ENCODE measurements at regions of chr7 and their contacts with region 1.

Region 1: GRCh38 chr7:97027427-97028234 is 3.0 kb upstream of the DLX5 start:
- DNase-seq: peak; percentile 89
- H3K4me3 ChIP-seq: peak overlapping the region; percentile 16 to 38; a peak in 3 of 4 replicates
- H3K27ac ChIP-seq: no peak overlapping the region
- H3K4me1 ChIP-seq: peaks cover 0 to 12% of the 10 kb centered on the region in 2 experiments; a peak in 1 of 4 replicates
- H3K27me3 ChIP-seq: peaks cover 22% of the 10 kb centered on the region
- CTCF ChIP-seq: peak; percentile 99
- EP300 ChIP-seq: no peak
- RAD21 ChIP-seq: peak; percentile 100

Region 2: DNA sequence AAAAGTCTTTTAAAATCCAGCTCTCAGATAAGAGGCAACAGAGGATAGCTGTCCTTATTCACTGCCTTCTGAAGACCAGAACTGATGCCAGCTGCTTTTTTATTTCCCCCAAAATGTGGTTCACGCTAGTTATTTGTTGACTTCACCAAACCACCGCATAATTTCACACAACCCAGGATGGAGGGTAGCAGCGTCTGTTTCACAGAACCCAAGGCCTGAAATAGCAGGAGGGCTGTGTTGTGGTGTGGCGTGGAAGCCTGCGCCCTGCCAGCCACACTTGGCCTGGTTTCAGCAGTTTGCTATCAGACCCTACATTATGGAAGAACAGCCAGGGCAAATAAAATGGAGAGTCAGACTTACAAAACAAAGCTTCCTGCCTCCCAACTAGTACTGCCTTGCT is 1099.9 kb before region 1 on chr7:
- CTCF ChIA-PET with region 1: interaction called, 15 read pairs
- POLR2A ChIA-PET with region 1: no interaction called
- DNase-seq: peak; percentile 36
- H3K4me3 ChIP-seq: no peak overlapping the region
- H3K27ac ChIP-seq: no peak overlapping the region
- H3K4me1 ChIP-seq: peaks cover 0 to 9% of the 10 kb centered on the region in 2 experiments; a peak in 2 of 4 replicates
- H3K27me3 ChIP-seq: no peaks in the 10 kb centered on the region
- CTCF ChIP-seq: no peak
- EP300 ChIP-seq: peak in 1 of 2 experiments; percentile 29; a peak in 1 of 4 replicates
- RAD21 ChIP-seq: no peak

Region 3: GRCh38 chr7:96075510-96076349 is 951.9 kb before region 1 on chr7:
- CTCF ChIA-PET with region 1: interaction called, 99 read pairs
- POLR2A ChIA-PET with region 1: no interaction called
- DNase-seq: peak; percentile 91
- H3K4me3 ChIP-seq: peak overlapping the region; percentile 68 to 69
- H3K27ac ChIP-seq: no peak overlapping the region
- H3K4me1 ChIP-seq: peaks cover 3 to 7% of the 10 kb centered on the region in 2 experiments; a peak in 3 of 4 replicates
- H3K27me3 ChIP-seq: peaks cover 11% of the 10 kb centered on the region; the same call in 1 of the 2 replicates
- CTCF ChIP-seq: peak; percentile 99
- EP300 ChIP-seq: no peak
- RAD21 ChIP-seq: peak; percentile 98

Region 4: DNA sequence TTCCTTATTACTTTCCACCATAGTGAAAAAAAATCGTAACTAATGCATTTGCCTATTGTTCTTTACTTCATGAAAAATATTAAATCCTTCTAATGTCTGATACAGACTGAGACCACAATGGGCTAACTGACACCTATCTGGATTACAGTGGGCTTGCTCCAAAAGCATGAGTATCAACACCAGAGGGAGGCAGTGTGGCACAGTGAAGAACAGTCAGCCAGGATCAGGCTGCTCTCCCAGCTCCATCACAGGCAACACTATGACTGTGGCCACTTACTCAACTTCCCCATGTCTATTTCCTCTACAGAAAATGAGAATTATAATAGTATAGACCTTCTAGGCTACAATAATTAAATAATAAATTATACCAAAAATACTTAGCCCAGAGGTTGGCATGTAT is 802.9 kb before region 1 on chr7:
- CTCF ChIA-PET with region 1: interaction called, 13 read pairs
- POLR2A ChIA-PET with region 1: no interaction called
- DNase-seq: peak; percentile 51
- H3K4me3 ChIP-seq: no peak overlapping the region
- H3K27ac ChIP-seq: no peak overlapping the region
- H3K4me1 ChIP-seq: peaks cover 0 to 5% of the 10 kb centered on the region in 2 experiments; a peak in 2 of 4 replicates
- H3K27me3 ChIP-seq: no peaks in the 10 kb centered on the region
- CTCF ChIP-seq: peak; percentile 42
- EP300 ChIP-seq: no peak
- RAD21 ChIP-seq: peak; percentile 57

Region 5: GRCh38 chr7:97006036-97006815 is 21.4 kb before region 1 on chr7:
- CTCF ChIA-PET with region 1: interaction called, 40 read pairs
- POLR2A ChIA-PET with region 1: interaction called, 7 read pairs
- DNase-seq: peak; percentile 93
- H3K4me3 ChIP-seq: peak overlapping the region; percentile 54 to 68
- H3K27ac ChIP-seq: peak overlapping the region in 1 of 2 experiments; percentile 92; a peak in 2 of 4 replicates
- H3K4me1 ChIP-seq: peaks cover 0 to 12% of the 10 kb centered on the region in 2 experiments; a peak in 1 of 4 replicates
- H3K27me3 ChIP-seq: 0 out of 2 replicates have a peak, but pooled peaks cover 8% of the 10 kb centered on the region
- CTCF ChIP-seq: no peak
- EP300 ChIP-seq: peak in 1 of 2 experiments; percentile 65; a peak in 1 of 4 replicates
- RAD21 ChIP-seq: no peak

Region 6: DNA sequence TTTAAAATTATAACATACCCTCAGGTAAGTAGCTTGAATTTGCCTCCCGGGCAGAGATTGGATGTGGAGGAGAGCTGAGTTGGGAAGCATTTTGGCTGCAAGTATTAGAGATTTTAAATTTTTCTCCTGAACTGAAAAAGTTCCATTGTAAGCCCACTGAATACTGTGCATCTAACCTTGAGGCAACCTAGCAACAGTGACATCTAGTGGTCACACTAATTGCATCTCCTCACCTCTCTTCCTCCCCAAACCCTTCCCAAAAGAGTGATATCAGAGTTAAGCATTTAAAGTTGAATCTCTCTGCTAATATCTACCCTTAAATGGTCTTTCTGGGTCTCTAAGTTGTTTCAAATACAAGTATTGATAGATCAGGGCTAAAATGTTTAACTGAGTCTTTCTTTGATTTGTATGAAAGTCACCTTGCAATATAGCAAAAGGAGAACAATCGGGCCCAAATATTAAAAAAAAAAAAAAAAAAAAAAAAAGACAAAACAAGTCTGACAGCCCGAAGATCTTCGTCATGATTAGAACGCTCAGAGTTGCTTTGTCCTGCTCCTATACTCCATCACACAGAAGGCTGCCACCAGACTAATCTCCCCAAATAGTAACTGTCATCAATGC is 37.4 kb after region 1 on chr7:
- CTCF ChIA-PET with region 1: interaction called, 25 read pairs
- POLR2A ChIA-PET with region 1: no interaction called
- DNase-seq: peak; percentile 78
- H3K4me3 ChIP-seq: peak overlapping the region in 1 of 2 experiments; percentile 18; a peak in 1 of 4 replicates
- H3K27ac ChIP-seq: no peak overlapping the region
- H3K4me1 ChIP-seq: no peaks in the 10 kb centered on the region
- H3K27me3 ChIP-seq: no peaks in the 10 kb centered on the region
- CTCF ChIP-seq: peak; percentile 98
- EP300 ChIP-seq: no peak
- RAD21 ChIP-seq: peak; percentile 74

Region 7: GRCh38 chr7:97179454-97180104 is 151.9 kb after region 1 on chr7:
- CTCF ChIA-PET with region 1: no interaction called
- POLR2A ChIA-PET with region 1: no interaction called
- DNase-seq: peak; percentile 84
- H3K4me3 ChIP-seq: no peak overlapping the region; a peak in 1 of 4 replicates
- H3K27ac ChIP-seq: no peak overlapping the region
- H3K4me1 ChIP-seq: peaks cover 0 to 3% of the 10 kb centered on the region in 2 experiments; a peak in 1 of 4 replicates
- H3K27me3 ChIP-seq: no peaks in the 10 kb centered on the region
- CTCF ChIP-seq: peak; percentile 96
- EP300 ChIP-seq: no peak
- RAD21 ChIP-seq: peak; percentile 80

Region 8: DNA sequence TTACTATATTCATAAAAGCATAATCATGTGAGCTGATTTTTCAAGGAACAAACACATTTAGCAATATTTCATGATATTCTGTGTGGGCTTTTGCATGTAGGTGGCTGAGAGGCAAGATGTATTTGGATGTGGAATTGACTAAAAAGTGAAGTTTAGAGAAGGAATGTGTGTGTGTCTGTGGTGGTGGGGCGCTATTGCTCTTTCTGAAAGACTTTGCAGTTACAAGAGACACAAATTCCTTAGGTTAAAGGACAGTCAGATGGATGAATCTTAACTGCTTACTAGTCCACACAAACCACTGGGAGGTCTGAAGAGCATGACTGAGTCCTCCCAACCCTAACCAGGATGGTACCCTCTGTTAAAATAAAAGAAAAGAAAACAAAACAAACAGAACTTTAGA is 289.9 kb after region 1 on chr7:
- CTCF ChIA-PET with region 1: no interaction called
- POLR2A ChIA-PET with region 1: no interaction called
- DNase-seq: no peak
- H3K4me3 ChIP-seq: no peak overlapping the region
- H3K27ac ChIP-seq: no peak overlapping the region
- H3K4me1 ChIP-seq: no peaks in the 10 kb centered on the region
- H3K27me3 ChIP-seq: peaks cover 8% of the 10 kb centered on the region; the same call in 1 of the 2 replicates
- CTCF ChIP-seq: no peak
- EP300 ChIP-seq: no peak
- RAD21 ChIP-seq: no peak